CD8-positive, alpha-beta T cell (primary cell): ENCODE measurements at regions of chr12 and their contacts with region 1.

Region 1: GRCh38 chr12:123713398-123713797 is 1.2 kb downstream of the ATP6V0A2 start:
- DNase-seq: peak in 1 of 9 experiments; percentile 21
- ATAC-seq: no peak
- H3K4me3 ChIP-seq: peak overlapping the region; percentile 69 to 98
- H3K4me3 Mint-ChIP-seq: peak overlapping the region; percentile 84
- H3K27ac ChIP-seq: no peak overlapping the region
- H3K27ac Mint-ChIP-seq: peak overlapping the region; percentile 86
- H3K4me1 ChIP-seq: peaks cover 22% of the 10 kb centered on the region
- H3K4me1 Mint-ChIP-seq: peaks cover 45% of the 10 kb centered on the region
- H3K27me3 ChIP-seq: no peaks in the 10 kb centered on the region
- H3K27me3 Mint-ChIP-seq: no peaks in the 10 kb centered on the region
- CTCF ChIP-seq: no peak

Region 2: GRCh38 chr12:122584177-122584780 is 1129.1 kb before region 1 on chr12:
- CTCF ChIA-PET with region 1: no interaction called
- POLR2A ChIA-PET with region 1: no interaction called
- intact Hi-C with region 1: no loop called
- DNase-seq: no peak
- ATAC-seq: no peak
- H3K4me3 ChIP-seq: no peak overlapping the region
- H3K4me3 Mint-ChIP-seq: no peak overlapping the region
- H3K27ac ChIP-seq: no peak overlapping the region
- H3K27ac Mint-ChIP-seq: no peak overlapping the region
- H3K4me1 ChIP-seq: no peaks in the 10 kb centered on the region
- H3K4me1 Mint-ChIP-seq: no peaks in the 10 kb centered on the region
- H3K27me3 ChIP-seq: no peaks in the 10 kb centered on the region
- H3K27me3 Mint-ChIP-seq: no peaks in the 10 kb centered on the region
- CTCF ChIP-seq: no peak

Region 3: DNA sequence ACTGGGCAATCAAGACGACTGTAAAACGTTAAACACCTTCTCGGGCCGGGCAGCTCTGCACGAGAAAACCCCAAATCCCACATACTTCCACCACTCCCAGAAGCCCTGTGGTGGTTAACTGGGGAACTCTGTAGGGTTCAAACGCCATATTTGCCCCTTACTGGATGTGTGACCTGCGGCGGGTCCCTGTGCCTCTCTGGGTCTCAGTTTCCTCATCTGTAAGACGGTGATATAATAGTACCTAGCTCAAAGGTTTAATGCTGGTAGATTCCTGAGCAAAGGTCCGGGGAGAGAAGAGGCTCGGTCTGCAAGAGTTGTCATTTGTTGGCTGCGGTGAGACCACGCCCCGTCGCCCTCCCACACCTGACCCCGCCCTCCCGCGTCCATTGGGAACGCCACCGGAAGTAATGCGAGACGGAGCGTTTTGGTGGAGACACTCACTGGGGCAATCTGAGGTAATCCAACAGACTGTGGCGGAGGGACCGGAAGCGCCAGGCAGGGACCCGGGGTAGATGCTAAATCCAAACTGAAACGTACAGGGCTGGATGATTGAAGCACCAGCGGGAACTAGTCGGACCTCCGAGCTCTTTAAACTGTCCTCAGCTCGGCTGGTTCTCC is 739.0 kb before region 1 on chr12:
- CTCF ChIA-PET with region 1: no interaction called
- POLR2A ChIA-PET with region 1: no interaction called
- intact Hi-C with region 1: loop called in 1 of 2 experiments (anchors 10 kb)
- DNase-seq: peak; percentile 97 to 100 (median 99)
- ATAC-seq: peak; percentile 85
- H3K4me3 ChIP-seq: peak overlapping the region; percentile 91 to 93
- H3K4me3 Mint-ChIP-seq: peak overlapping the region; percentile 98
- H3K27ac ChIP-seq: peak overlapping the region; percentile 93 to 97
- H3K27ac Mint-ChIP-seq: peak overlapping the region; percentile 98
- H3K4me1 ChIP-seq: peaks cover 26% of the 10 kb centered on the region
- H3K4me1 Mint-ChIP-seq: peaks cover 31% of the 10 kb centered on the region
- H3K27me3 ChIP-seq: no peaks in the 10 kb centered on the region
- H3K27me3 Mint-ChIP-seq: no peaks in the 10 kb centered on the region
- CTCF ChIP-seq: no peak

Region 4: GRCh38 chr12:123670882-123671728 is 42.3 kb before region 1 on chr12 and contains the start of gene TCTN2:
- CTCF ChIA-PET with region 1: interaction called, 3 read pairs
- POLR2A ChIA-PET with region 1: no interaction called
- intact Hi-C with region 1: loop called (anchors 1 kb)
- DNase-seq: peak; percentile 86 to 95 (median 94)
- ATAC-seq: peak; percentile 100
- H3K4me3 ChIP-seq: peak within 1 kb of the TSS; percentile 91 to 92
- H3K4me3 Mint-ChIP-seq: peak within 1 kb of the TSS; percentile 87
- H3K27ac ChIP-seq: peak within 1 kb of the TSS in 1 of 2 experiments; percentile 41
- H3K27ac Mint-ChIP-seq: peak within 1 kb of the TSS; percentile 69
- H3K4me1 ChIP-seq: peaks cover 11% of the 10 kb centered on the region
- H3K4me1 Mint-ChIP-seq: peaks cover 17% of the 10 kb centered on the region
- H3K27me3 ChIP-seq: no peaks in the 10 kb centered on the region
- H3K27me3 Mint-ChIP-seq: no peaks in the 10 kb centered on the region
- CTCF ChIP-seq: no peak
- total RNA-seq, gene TCTN2: 1.9 to 3.3 TPM